ENCODE measurements at regions of chr16 and their contacts with region 1.

Region 1: GRCh38 chr16:50368410-50369132 is at the start of gene BRD7:
- DNase-seq: peak; percentile 54 to 85 (median 70)
- ATAC-seq: peak; percentile 34 to 85 (median 68)
- H3K4me3 ChIP-seq: peak within 1 kb of the TSS; percentile 78 to 99 (median 96)
- H3K27ac ChIP-seq: peak within 1 kb of the TSS in 11 of 12 donors; percentile 39 to 82 (median 65)
- H3K4me1 ChIP-seq: peaks cover 7 to 48% (median 22%) of the 10 kb centered on the region in 12 donors
- H3K27me3 ChIP-seq: no peaks in the 10 kb centered on the region
- CTCF ChIP-seq: peak in 10 of 12 donors; percentile 33 to 76 (median 60)
- POLR2A ChIP-seq: no peak
- total RNA-seq, gene BRD7: 29.8 to 49.7 (median 45.3) TPM

Region 2: GRCh38 chr16:50245417-50246298 is 122.9 kb before region 1 on chr16:
- intact Hi-C with region 1: loop called in 1 of 10 experiments (anchors 5 kb)
- DNase-seq: peak in 4 of 5 donors; percentile 31 to 61 (median 54)
- ATAC-seq: peak in 3 of 4 donors; percentile 66 to 85 (median 79)
- H3K4me3 ChIP-seq: peak overlapping the region in 11 of 12 donors; percentile 33 to 78 (median 59)
- H3K27ac ChIP-seq: peak overlapping the region in 2 of 12 donors; percentile 12 to 13
- H3K4me1 ChIP-seq: peaks cover 0 to 21% (median 7%) of the 10 kb centered on the region in 12 donors
- H3K27me3 ChIP-seq: peaks cover 0 to 21% (median 0%) of the 10 kb centered on the region in 9 donors
- CTCF ChIP-seq: peak in 8 of 12 donors; percentile 8 to 50 (median 36)
- POLR2A ChIP-seq: no peak

Region 3: GRCh38 chr16:50297301-50298067 is 71.1 kb before region 1 on chr16:
- intact Hi-C with region 1: no loop called
- DNase-seq: peak in 3 of 5 donors; percentile 32 to 51 (median 40)
- ATAC-seq: peak; percentile 28 to 66 (median 53)
- H3K4me3 ChIP-seq: no peak overlapping the region
- H3K27ac ChIP-seq: no peak overlapping the region
- H3K4me1 ChIP-seq: peaks cover 0 to 7% (median 0%) of the 10 kb centered on the region in 12 donors
- H3K27me3 ChIP-seq: no peaks in the 10 kb centered on the region
- CTCF ChIP-seq: no peak
- POLR2A ChIP-seq: no peak

Region 4: DNA sequence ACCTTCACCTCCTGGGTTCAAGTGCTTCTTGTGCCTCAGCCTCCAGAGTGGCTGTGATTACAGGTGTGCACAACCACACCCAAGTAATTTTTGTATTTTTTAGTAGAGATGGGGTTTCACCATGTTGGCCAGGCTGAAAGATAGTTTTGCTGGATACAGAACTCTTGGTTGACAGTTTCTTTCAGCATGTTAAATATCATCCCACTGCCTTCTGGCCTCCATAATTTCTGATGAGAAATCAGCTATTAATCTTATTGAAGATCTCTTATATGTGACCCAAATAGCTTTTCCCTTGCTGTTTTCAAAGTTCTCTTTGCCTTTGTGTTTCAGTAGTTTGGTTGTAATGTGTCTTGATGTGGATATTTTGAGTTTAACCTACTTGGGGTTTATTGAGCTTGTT is 50.5 kb after region 1 on chr16:
- intact Hi-C with region 1: no loop called
- DNase-seq: no peak
- ATAC-seq: no peak
- H3K4me3 ChIP-seq: no peak overlapping the region
- H3K27ac ChIP-seq: no peak overlapping the region
- H3K4me1 ChIP-seq: no peaks in the 10 kb centered on the region
- H3K27me3 ChIP-seq: peaks cover 0 to 12% (median 0%) of the 10 kb centered on the region in 9 donors
- CTCF ChIP-seq: no peak
- POLR2A ChIP-seq: no peak

Region 5: DNA sequence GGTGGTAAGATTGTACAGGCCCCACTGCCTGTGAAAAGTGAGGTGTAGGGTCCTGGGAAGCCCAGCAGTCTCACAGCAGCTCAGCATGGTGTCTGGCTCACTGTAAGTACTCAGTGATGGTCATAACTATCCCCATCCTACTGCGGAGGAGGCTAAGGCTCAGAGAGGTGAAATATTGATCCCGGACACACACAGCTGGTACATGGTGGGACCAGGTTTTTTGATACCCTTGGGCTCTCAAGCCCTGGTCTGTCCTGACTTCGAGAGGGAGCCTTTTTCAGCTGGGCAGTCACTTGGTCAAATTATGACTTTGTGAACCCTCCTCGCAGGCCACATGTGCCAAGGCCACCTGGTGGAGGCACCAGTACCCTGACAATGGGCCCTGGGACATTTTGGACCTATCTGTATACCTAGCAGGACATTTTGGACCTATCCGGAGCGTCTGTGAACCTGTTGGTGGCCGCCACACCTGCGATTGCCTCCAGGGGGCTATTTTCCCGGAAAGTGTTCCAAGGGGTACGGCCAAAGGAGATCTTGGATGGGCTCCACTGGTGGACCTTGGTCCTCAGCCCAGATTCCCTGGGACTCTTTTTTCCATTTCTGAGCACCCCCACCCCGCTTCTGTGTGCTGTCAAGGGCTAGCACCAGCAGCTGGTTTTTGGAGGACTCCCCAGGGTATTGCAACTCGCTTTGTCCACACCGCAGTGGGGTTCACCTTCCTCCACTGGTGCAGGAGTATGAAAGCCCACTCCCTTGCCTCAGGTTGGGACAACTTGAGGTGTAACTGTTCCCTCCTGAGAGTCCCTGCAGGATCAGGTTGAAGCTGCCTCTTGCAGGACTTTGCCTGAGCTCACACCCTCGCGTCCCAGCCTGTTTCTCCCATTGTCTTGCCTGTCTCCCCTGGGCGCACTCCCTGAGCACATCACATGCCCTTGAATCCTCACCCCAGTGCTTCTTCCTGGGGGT is 96.0 kb after region 1 on chr16:
- intact Hi-C with region 1: no loop called
- DNase-seq: no peak
- ATAC-seq: no peak
- H3K4me3 ChIP-seq: no peak overlapping the region
- H3K27ac ChIP-seq: no peak overlapping the region
- H3K4me1 ChIP-seq: peaks cover 0 to 11% (median 0%) of the 10 kb centered on the region in 12 donors
- H3K27me3 ChIP-seq: peaks cover 5 to 97% (median 39%) of the 10 kb centered on the region in 9 donors
- CTCF ChIP-seq: no peak
- POLR2A ChIP-seq: no peak

Region 6: DNA sequence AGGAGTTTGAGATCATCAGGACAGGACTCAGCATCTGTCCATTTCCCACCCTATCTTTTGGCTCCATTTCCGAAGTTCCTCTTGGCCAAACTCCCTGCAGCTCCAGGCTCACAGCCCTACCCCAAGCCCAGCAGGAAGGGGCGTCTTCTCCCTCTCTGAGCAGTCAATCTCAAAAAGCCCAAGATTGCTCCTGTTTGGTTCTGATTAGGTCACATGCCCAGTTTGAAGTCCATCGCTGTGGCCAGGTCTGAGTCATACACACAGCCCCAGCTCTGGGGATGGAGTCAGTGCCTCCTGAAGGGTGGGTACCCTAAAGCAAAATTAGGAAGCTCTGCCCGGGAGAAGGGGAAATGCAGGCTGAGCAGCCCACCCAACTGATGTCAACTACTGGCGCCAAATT is 288.7 kb after region 1 on chr16:
- intact Hi-C with region 1: loop called in 3 of 10 experiments (anchors 10 kb)
- DNase-seq: peak in 1 of 5 donors; percentile 40
- ATAC-seq: peak in 2 of 4 donors; percentile 22 to 38
- H3K4me3 ChIP-seq: no peak overlapping the region
- H3K27ac ChIP-seq: no peak overlapping the region
- H3K4me1 ChIP-seq: no peaks in the 10 kb centered on the region
- H3K27me3 ChIP-seq: peaks cover 0 to 5% (median 0%) of the 10 kb centered on the region in 9 donors
- CTCF ChIP-seq: no peak
- POLR2A ChIP-seq: no peak

Measured in heart left ventricle (tissue), 16 donors.